ENCODE measurements at regions of chr3 and their contacts with region 1.

Region 1: GRCh38 chr3:88113311-88114162 is 36.2 kb upstream of the C3orf38 start:
- DNase-seq: peak; percentile 33 to 78 (median 59)
- H3K4me3 ChIP-seq: no peak overlapping the region
- H3K27ac ChIP-seq: no peak overlapping the region
- H3K4me1 ChIP-seq: no peaks in the 10 kb centered on the region
- H3K27me3 ChIP-seq: no peaks in the 10 kb centered on the region
- CTCF ChIP-seq: peak; percentile 55 to 76 (median 67)
- POLR2A ChIP-seq: no peak

Region 2: DNA sequence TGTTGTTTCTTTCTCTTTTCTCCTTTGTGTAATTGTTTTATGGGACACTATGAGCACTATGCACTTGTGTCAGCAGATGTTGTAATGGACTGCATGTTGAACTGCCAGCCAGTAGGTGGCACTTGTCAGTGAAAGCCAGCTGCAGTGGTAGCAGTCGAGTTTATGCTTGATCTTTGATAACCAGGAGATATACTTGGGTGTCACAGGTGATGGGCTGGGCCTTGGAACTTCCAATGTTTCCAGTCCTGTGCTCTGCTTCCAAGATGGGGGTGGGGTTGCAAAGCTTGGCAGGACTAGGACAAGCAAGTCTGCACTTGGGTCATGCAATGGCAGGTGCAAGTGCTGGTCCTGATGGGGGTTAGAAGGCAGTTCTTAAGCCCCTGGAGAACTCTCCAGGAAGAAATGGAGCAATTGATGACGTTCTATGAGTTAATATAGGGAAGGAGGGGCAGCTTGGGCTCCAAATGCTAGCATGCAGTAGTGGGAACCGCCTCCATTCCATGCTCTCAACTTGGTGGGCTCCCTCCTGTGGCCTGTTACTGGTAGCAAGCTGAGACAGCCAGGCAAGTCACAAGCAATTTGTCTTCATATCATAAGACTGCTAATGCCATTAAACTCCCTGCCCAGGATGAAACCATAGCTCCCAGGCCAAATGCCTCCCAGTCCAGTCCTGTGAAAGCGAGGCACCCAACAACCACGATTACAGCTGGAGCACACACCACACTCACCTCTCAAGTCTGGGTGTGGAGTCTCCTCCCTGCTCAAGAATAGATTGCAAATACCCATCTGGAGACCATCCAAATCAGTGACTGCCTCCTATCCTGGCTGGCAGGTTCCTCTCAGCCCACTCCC is 342.0 kb before region 1 on chr3:
- intact Hi-C with region 1: loop called in 1 of 2 experiments (anchors 5 kb)
- DNase-seq: peak; percentile 21 to 59 (median 37)
- H3K4me3 ChIP-seq: no peak overlapping the region
- H3K27ac ChIP-seq: no peak overlapping the region
- H3K4me1 ChIP-seq: no peaks in the 10 kb centered on the region
- H3K27me3 ChIP-seq: no peaks in the 10 kb centered on the region
- CTCF ChIP-seq: peak; percentile 38 to 66 (median 64)
- POLR2A ChIP-seq: no peak

Region 3: GRCh38 chr3:88059369-88060170 is 54.0 kb before region 1 on chr3:
- intact Hi-C with region 1: loop called in 1 of 2 experiments (anchors 10 kb)
- DNase-seq: peak in 2 of 7 donors; percentile 22 to 29
- H3K4me3 ChIP-seq: peak overlapping the region; percentile 66 to 86 (median 76)
- H3K27ac ChIP-seq: peak overlapping the region in 4 of 5 donors; percentile 78 to 96 (median 86)
- H3K4me1 ChIP-seq: peaks cover 14 to 57% of the 10 kb centered on the region in 2 donors
- H3K27me3 ChIP-seq: no peaks in the 10 kb centered on the region
- CTCF ChIP-seq: peak in 1 of 6 experiments; percentile 6
- POLR2A ChIP-seq: peak in 1 of 2 donors; percentile 60

Measured in adrenal gland (tissue), 19 donors.